ENCODE measurements at regions of chr7 and their contacts with region 1.

Region 1: DNA sequence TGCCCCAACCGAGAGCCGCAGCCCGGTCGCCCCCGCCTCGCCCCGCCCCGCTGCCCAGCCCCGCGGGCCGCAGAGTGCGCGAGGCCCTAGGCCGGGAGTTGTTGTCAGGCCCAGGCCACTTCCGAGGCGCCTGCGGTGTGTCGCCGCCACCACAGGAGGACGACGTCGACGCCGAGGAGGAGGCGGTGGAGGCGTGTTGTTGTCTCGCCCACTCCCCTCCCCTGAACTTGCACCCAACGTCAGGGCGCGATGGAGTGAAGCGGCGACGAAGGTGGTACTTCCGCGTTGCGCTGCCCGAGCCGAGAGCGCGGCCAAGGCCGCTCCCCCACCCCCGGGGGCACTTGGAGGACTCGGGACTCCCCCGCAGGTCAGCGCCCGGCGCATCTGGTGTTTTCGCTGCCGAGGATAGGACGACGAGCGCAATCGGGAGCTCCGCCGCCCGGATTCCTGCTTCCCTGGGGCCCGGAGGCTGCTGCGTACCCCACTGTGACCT is at the start of gene CDK13:
- DNase-seq: peak; percentile 79 to 85
- H3K4me3 ChIP-seq: peak within 1 kb of the TSS; percentile 86 to 98
- H3K27ac ChIP-seq: peak within 1 kb of the TSS; percentile 98 to 100
- H3K4me1 ChIP-seq: peaks cover 0 to 35% (median 22%) of the 10 kb centered on the region in 4 donors
- H3K27me3 ChIP-seq: no peaks in the 10 kb centered on the region
- CTCF ChIP-seq: no peak

Region 2: GRCh38 chr7:39921506-39922175 is 28.4 kb before region 1 on chr7:
- intact Hi-C with region 1: no loop called
- DNase-seq: no peak
- H3K4me3 ChIP-seq: no peak overlapping the region
- H3K27ac ChIP-seq: no peak overlapping the region
- H3K4me1 ChIP-seq: no peaks in the 10 kb centered on the region
- H3K27me3 ChIP-seq: peaks cover 0 to 8% of the 10 kb centered on the region in 2 donors
- CTCF ChIP-seq: no peak

Region 3: GRCh38 chr7:40134428-40135316 is 184.6 kb after region 1 on chr7 and contains the starts of genes MPLKIP and SUGCT:
- intact Hi-C with region 1: loop called (anchors 10 kb)
- DNase-seq: peak; percentile 83 to 91
- H3K4me3 ChIP-seq: peak within 1 kb of the TSS; percentile 91 to 92
- H3K27ac ChIP-seq: peak within 1 kb of the TSS; percentile 93 to 94
- H3K4me1 ChIP-seq: peaks cover 0 to 36% (median 23%) of the 10 kb centered on the region in 4 donors
- H3K27me3 ChIP-seq: no peaks in the 10 kb centered on the region
- CTCF ChIP-seq: peak; percentile 97 to 99

Measured in tibial artery (tissue), 4 donors.